ENCODE measurements at regions of chr4 and their contacts with region 1.

Region 1: GRCh38 chr4:26459054-26459755 is 31.1 kb downstream of the CCKAR start:
- DNase-seq: peak; percentile 46

Region 2: DNA sequence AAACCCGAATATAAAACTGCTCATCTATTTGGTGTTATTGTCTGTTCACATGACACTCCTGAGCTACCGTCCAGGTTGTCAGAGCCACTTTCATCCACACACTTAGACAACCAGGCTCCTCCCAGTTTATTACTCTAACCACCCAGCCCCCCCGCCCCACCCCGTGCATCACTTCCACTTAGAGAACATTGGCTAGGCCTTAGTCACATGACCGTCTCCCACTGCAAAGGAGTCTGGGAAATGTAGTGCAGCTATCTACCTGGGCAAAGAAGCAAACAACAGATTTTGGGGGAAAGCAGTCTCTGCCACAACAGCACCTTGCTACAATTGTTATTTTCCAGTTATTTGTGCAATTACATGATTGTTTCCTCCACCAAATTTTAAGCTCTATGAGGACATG is 196.0 kb before region 1 on chr4:
- in situ Hi-C with region 1: no loop called
- DNase-seq: no peak

Region 3: GRCh38 chr4:26619784-26620183 is 160.6 kb after region 1 on chr4:
- in situ Hi-C with region 1: no loop called
- DNase-seq: no peak

Region 4: DNA sequence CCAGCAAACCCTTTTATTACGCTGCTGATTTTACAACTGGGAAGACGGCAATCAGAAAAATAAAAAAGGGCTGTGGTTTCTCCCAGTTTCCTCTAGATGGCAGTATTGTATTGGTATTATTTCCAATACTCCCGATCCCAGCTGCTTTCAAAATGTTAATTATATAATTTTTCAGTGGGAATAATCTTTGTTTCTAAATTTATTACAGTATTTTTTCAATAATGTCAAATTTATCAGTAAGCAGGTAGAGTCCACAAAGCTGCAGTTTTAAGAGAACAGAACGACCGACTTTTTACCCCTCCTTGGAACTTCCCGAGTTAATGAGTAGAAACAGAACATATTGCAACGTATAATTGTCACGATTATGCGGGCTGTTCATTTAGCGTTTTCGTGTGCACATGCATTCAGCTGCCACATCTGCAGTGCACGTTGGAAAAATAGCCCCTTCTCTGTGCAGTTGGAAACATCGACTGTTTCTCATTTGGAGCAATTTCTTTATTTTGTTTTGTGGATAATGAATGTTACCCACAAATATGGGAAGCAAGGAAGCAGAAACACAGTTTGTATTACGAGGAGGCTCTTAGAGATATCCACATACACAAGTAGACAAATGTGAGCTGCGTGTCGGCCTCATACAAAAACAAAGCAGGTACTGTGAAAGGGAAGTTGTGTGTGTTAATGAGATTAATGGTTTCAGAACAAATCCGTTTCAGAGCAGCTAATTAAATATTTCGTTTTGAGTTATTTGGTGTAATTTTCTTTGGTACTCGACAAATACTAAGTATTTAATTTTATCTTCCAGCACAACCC is 589.4 kb after region 1 on chr4:
- in situ Hi-C with region 1: loop called (anchors 25 kb)
- DNase-seq: peak; percentile 63